Pancreas (tissue), 10 donors: ENCODE measurements at regions of chr2 and their contacts with region 1.

Region 1: DNA sequence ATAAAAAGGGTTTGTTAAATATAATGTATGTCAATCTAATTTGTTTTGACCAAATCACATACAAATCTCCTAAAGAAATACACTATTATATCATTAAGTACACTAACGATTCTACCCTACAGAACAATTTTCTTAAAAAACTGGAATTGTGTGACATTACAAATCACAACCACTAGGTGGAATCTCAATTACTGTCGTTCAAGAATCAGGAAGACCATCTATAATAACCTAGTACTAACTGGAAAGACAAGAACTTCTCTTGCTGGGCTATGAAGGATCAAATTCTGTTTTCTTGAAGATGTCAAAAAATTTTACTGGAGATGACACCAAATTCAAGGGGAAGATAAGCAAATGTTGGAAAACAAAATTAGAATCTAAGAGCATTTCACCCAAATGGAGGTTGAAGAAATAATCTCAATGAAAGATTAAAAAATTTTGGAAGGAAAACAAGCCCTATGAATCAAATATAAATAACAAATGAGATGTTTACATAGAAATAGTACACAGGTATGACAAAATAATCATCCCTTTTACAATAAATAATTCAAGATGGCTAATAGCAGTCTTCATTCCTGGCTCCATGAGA is 110.9 kb downstream of the STK39 start:
- DNase-seq: no peak
- ATAC-seq: peak; percentile 59 to 72 (median 64)
- H3K4me3 ChIP-seq: no peak overlapping the region
- H3K27ac ChIP-seq: peak overlapping the region in 1 of 4 donors; percentile 51
- H3K4me1 ChIP-seq: peaks cover 25 to 28% (median 25%) of the 10 kb centered on the region in 3 donors
- H3K27me3 ChIP-seq: no peaks in the 10 kb centered on the region
- CTCF ChIP-seq: peak; percentile 31 to 51 (median 42)

Region 2: GRCh38 chr2:168194784-168195522 is 58.5 kb after region 1 on chr2:
- intact Hi-C with region 1: no loop called
- DNase-seq: no peak
- ATAC-seq: no peak
- H3K4me3 ChIP-seq: no peak overlapping the region
- H3K27ac ChIP-seq: no peak overlapping the region
- H3K4me1 ChIP-seq: peaks cover 18 to 50% (median 21%) of the 10 kb centered on the region in 3 donors
- H3K27me3 ChIP-seq: no peaks in the 10 kb centered on the region
- CTCF ChIP-seq: no peak

Region 3: GRCh38 chr2:168246483-168247340 is 110.2 kb after region 1 on chr2:
- intact Hi-C with region 1: loop called in 1 of 3 experiments (anchors 10 kb)
- DNase-seq: peak; percentile 76 to 90 (median 83)
- ATAC-seq: peak; percentile 75 to 88 (median 80)
- H3K4me3 ChIP-seq: peak overlapping the region; percentile 69 to 93 (median 90)
- H3K27ac ChIP-seq: peak overlapping the region; percentile 81 to 95 (median 91)
- H3K4me1 ChIP-seq: peaks cover 10 to 28% (median 14%) of the 10 kb centered on the region in 3 donors
- H3K27me3 ChIP-seq: no peaks in the 10 kb centered on the region
- CTCF ChIP-seq: peak in 1 of 4 donors; percentile 9

Region 4: GRCh38 chr2:168336864-168337263 is 200.4 kb after region 1 on chr2:
- intact Hi-C with region 1: loop called in 1 of 3 experiments (anchors 5 kb)
- DNase-seq: peak; percentile 70 to 82 (median 78)
- ATAC-seq: peak; percentile 90 to 97 (median 94)
- H3K4me3 ChIP-seq: no peak overlapping the region
- H3K27ac ChIP-seq: no peak overlapping the region
- H3K4me1 ChIP-seq: peaks cover 8 to 15% (median 11%) of the 10 kb centered on the region in 3 donors
- H3K27me3 ChIP-seq: no peaks in the 10 kb centered on the region
- CTCF ChIP-seq: peak in 3 of 4 donors; percentile 27 to 49 (median 35)